Uterus (tissue), 4 donors: ENCODE measurements at regions of chrX and their contacts with region 1.

Region 1: GRCh38 chrX:54551801-54552200 is 21.8 kb downstream of the GNL3L start:
- DNase-seq: no peak
- H3K4me3 ChIP-seq: no peak overlapping the region
- H3K27ac ChIP-seq: no peak overlapping the region
- H3K4me1 ChIP-seq: no peaks in the 10 kb centered on the region
- H3K27me3 ChIP-seq: no peaks in the 10 kb centered on the region
- CTCF ChIP-seq: no peak
- POLR2A ChIP-seq: no peak

Region 2: DNA sequence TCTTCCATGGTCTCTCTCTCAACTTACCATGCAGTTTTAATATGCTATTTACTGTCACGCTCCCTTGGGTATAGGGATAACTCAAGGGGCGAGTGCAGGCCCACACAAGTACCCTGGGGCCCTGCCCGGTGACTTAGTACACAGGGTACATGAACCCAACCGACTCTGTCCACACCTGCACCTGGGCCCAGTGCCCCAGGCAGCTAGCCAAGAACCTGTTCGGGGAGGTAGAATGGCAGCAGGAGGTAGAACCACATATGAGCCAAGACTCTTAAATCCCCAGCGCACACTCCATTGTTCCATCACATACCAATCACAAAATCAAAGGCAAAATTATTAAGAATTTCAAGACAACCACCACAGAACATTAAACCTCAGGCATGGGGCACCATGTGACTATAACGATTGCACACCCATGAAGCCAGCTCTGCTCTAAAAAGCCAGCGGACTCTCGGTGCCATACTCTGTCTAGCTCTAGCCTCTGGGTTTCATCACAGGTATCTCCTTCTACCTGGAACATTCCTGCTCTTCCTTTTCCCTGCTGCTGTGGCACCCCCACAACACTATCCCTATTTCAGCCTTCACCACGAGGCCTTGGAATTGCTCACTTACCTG is 522.2 kb before region 1 on chrX:
- intact Hi-C with region 1: no loop called
- DNase-seq: no peak
- H3K4me3 ChIP-seq: no peak overlapping the region
- H3K27ac ChIP-seq: no peak overlapping the region
- H3K4me1 ChIP-seq: no peaks in the 10 kb centered on the region
- H3K27me3 ChIP-seq: no peaks in the 10 kb centered on the region
- CTCF ChIP-seq: no peak
- POLR2A ChIP-seq: no peak

Region 3: GRCh38 chrX:54950730-54951375 is 399.1 kb after region 1 on chrX:
- intact Hi-C with region 1: no loop called
- DNase-seq: no peak
- H3K4me3 ChIP-seq: no peak overlapping the region
- H3K27ac ChIP-seq: no peak overlapping the region
- H3K4me1 ChIP-seq: no peaks in the 10 kb centered on the region
- H3K27me3 ChIP-seq: no peaks in the 10 kb centered on the region
- CTCF ChIP-seq: no peak
- POLR2A ChIP-seq: no peak

Region 4: DNA sequence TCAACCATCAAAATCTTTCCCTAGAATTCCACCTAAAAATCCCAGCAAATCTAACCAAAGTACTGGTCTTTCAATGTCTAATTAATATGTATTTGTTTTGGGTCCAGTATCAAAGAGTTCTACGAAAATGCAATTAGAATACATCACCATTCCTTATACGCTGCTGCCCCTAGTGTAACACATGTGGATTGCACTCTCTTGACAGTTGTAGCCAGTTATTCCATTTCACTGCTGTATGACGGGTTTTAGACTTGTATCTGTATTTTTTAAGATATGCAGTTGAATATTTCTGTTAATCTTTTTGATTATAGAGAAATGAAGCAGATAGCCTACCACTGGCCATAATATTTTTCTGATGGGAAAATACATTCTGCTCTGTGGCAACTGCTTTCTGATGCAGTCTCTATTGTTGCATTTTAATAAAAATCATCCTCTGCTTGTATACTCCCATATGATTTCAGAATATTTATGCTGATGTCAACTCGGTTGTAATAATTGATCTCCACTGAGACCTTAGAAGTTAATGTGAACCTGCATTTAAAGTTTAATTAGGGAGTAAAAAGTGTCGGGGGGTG is 506.0 kb after region 1 on chrX:
- intact Hi-C with region 1: loop called (anchors 5 kb)
- DNase-seq: peak in 1 of 2 donors; percentile 19
- H3K4me3 ChIP-seq: no peak overlapping the region
- H3K27ac ChIP-seq: no peak overlapping the region
- H3K4me1 ChIP-seq: no peaks in the 10 kb centered on the region
- H3K27me3 ChIP-seq: no peaks in the 10 kb centered on the region
- CTCF ChIP-seq: peak; percentile 58 to 74 (median 64)
- POLR2A ChIP-seq: no peak